ENCODE measurements at regions of chr9 and their contacts with region 1.

Region 1: DNA sequence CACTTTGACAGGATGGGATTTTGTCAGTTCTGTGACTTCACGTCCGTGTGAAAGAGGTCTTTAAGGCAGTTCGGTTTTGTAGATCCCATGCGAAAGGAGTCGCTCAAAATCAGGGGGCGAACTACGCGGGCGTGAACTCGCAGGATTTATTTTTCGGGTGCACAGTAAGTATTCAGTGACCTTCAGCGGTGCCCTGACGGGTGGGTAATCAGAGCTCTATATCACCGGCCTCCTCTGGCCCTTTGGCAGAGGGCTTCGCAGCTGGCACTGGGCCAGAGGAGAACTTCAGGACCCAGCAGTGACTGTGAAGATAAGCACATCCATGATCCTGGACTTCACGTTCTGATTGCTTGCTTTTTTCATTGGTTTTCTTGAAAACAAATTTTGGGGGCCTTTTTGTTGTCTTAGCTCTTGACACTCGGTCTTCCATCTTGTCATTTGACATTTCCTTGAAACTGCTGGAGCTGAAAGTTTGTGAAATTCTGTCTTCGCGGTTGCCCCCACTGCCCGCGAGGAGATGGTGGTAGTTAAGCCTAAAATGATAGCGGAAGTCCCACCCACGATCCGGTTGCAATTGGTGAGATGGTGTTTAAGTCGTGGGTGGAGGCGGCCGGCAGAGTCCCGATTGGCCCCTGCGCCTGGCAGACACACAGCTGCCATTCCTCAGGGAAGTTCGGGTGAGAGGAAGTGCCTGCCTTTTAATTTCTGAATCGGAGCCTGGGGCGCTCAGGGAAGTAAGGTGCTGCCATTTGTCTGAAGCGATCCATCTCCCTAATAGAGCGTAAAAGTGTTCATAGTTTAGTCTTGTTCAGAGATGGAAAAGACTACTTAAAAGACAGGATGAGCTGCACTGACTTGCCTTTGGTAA is at the start of gene FAM120AOS:
- DNase-seq: peak; percentile 95
- ATAC-seq: peak; percentile 87
- total RNA-seq, gene FAM120AOS: 28.8 TPM

Region 2: DNA sequence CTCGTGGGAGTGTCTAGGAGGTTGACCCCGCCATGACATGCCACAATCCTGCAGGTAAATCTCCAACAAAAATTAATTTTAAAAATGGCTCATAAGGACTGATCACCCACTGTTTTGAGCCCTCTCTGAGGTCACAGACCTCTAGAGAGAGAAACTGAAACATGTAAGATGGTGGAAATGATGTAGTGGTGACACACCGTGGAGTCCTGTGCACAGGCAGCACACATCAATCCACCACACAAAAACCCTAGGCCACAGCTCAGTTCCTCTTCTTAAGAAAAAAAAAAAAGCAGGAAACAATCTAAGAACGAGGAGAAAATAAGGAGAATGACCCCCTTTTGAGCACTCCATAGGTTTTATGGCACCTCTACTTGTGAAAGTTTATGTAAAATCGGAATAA is 95.6 kb before region 1 on chr9:
- intact Hi-C with region 1: no loop called
- DNase-seq: no peak
- ATAC-seq: no peak

Region 3: GRCh38 chr9:93501406-93501805 is 48.1 kb after region 1 on chr9:
- intact Hi-C with region 1: loop called (anchors 10 kb)
- DNase-seq: no peak
- ATAC-seq: peak; percentile 39

Region 4: DNA sequence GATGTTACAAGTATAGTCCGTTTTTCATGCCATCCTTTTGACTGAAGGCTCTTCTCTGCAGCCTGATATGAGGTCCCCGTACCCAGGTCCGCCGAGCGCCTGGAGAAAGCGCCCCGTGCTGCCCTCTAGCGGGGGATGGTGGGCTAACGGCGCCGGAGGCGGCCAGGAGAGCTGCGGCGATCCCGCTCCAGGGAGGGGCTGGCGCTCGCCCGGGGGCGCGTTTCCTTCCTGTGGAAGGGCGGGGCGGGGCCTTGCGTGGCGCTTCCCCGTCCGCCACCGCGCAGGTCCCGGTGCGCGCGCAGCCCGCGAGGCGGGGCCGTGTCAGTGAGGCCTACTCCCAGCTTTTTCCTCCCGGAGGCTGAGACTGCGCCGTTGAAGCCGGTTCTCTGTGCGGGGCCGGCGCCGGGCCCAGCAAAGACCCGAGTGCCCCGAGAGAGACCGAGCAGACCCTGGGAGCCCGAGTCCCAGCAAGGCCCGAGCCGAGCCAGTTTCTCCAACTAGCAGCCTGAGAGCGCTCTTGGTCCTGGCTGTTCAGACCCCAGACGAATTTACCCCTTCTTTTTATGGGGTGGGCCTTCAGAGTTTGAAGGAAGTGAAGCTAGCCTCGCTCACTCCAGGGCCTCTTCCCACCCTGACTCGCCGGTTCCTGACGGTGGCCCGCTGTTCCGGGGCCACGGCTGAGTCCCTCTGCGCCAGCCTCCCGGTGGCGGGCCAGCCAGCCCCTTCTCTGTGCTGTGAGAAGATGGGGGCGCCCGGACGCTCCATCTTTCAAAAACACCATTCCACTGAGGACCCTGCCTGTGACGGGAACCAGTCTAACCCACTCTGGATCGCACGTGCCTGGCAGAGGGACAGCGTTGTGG is 113.4 kb after region 1 on chr9:
- intact Hi-C with region 1: loop called (anchors 5 kb)
- DNase-seq: peak; percentile 99
- ATAC-seq: peak; percentile 99